GM13976 (cell line): ENCODE measurements at regions of chr9 and their contacts with region 1.

Region 1: GRCh38 chr9:32968101-32969011 is 33.1 kb downstream of the APTX start:
- DNase-seq: peak; percentile 54
- CTCF ChIP-seq: peak; percentile 77

Region 2: DNA sequence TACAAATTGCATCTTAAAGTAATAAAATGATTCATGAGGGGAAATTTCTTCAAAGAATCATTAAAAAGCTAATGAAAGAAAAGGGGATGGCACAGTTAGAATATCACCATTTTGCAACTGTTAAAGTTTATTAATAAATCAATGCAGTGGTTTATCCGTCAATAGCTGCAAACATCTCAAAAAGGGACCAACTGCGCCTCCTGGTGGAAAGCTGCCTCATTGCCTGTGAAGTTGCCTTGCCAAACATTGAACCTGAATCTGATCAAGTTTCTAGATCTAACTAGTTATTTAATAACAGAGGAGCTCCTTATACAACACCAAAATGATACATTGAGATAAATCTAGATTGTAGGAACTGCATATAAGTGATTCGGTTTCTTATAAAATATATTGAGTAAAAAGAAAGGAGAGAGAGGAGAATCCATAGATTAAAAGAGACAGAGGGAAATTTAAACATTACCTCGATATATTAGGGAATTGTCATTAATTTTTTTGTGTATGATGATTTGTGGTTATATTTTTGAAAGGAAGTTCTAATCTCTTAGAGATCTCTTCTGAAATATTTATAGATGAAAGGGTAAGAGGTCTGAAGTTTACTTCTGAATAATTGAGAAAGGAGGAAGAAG is 388.5 kb before region 1 on chr9:
- in situ Hi-C with region 1: loop called (anchors 5 kb)
- DNase-seq: peak; percentile 46
- CTCF ChIP-seq: peak; percentile 92

Region 3: DNA sequence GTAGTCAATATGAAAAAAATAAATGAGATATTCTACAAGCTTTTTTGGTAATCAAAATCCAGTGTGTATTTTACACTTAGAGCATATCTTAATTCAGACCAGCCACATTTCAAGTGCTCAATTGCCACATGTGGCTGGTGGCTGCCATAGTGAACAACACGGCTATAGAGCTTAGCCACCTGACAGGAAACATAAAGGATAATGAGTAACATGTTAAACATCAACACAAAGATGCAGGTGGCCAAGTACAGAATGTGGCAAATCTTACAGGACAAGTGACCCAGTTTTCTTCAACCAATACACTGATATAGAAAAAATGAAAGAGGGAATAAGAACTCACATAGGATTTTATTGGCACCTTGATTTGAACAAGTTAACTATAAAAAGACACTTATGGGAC is 1299.3 kb after region 1 on chr9:
- in situ Hi-C with region 1: no loop called
- DNase-seq: no peak
- CTCF ChIP-seq: no peak